Cardiac septum (tissue), 1 donor: ENCODE measurements at regions of chr2 and their contacts with region 1.

Region 1: DNA sequence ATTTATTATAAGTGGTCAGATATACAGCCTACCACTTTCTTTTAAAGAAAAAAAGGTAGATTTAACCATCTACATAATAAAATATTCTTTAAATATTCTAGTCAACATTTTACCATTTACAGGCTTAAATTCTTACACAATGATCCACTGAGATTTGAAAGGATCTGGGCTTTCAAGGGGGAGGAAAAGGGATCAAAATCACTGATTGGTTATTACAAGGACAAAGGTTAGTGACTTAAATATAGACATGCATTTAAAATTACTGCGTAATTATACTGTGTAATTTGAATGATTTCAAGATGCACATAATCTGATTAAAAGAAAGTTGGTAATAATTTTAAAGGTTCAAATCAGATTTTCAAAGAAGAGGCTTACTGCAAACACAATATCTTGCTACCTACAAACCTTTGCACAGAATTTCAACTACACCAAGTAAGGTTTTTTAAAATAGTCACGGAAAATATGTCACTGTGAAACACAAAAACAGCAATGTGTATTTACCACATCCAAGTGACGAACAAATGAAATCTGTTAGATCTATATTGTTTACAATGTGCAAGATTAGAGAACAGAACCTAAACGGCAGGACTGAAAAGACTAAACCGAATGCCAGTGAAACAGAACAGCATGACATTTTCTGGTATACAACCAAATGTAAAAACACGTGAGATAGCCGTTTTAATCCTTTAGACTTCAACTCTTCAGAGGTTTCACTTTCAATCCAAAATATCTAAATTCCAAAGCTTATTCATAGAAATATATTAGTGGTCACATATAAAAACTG is 40.8 kb downstream of the RTN4 start:
- DNase-seq: no peak

Region 2: GRCh38 chr2:54723131-54723995 is 286.1 kb before region 1 on chr2 and contains the start of gene EML6:
- intact Hi-C with region 1: loop called (anchors 10 kb)
- DNase-seq: peak; percentile 99
- total RNA-seq, gene EML6: 0.83 TPM

Region 3: DNA sequence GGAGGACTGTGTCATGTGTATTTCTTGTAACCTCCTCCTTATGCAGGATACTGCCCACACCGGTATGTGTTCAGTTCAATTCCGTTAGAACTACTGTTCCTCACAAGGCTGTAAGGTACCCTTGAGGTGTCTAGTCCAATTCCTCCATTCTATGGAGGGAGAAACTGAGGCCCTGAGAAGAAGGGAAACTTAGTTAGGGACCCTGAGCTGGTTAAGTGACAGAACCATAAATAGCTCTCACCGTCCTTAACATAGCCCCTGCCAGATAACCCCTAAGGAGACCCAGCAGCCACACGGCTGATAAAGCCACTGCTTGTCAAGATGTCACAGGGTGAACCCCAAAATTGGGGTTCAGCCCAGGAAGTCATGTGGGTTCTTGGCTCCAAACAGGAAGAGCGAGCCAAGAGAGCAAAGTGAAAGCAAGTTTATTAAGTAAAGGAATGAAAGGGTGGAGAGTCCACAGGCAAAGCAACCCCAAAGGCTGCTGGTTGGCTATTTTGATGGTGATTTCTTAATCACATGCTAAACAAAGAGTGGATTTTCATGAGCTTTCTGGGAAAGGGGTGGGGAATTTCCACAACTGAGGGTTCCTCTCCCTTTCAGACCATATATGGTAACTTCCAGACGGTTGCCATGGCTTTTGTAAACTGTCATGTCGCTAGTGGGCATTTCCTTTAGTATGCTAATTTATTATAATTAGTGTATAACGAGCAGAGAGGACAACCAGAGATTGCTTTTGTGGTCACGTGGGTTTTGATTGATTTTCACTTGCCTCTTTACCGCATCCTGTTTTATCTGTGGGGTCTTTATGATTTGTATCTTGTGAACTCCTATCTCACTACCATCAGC is 124.2 kb after region 1 on chr2:
- intact Hi-C with region 1: no loop called
- DNase-seq: no peak